Body of pancreas (tissue), 4 donors: ENCODE measurements at regions of chr1 and their contacts with region 1.

Region 1: DNA sequence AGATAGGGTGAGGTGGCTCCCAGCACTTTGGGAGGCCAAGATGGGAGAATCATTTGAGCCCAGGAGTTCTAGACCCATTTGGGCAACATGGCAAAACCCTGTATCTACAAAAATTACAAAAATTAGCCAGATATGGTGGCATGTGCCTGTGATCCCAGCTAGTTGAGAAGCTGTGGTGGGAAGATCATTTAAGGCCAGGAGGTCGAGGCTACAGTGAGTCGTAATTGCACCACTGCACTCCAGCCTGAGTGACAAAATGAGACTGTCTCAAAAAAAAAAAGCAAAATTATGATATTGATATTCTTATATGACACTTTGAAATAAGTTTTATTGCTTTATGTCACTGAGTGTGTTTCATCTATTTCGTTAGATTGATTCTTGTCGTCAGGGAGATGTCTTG is 7.4 kb downstream of the ACADM start:
- DNase-seq: no peak
- ATAC-seq: no peak
- H3K4me3 ChIP-seq: no peak overlapping the region
- H3K27ac ChIP-seq: no peak overlapping the region
- H3K4me1 ChIP-seq: peaks cover 18% of the 10 kb centered on the region
- H3K27me3 ChIP-seq: no peaks in the 10 kb centered on the region
- CTCF ChIP-seq: no peak
- POLR2A ChIP-seq: no peak

Region 2: DNA sequence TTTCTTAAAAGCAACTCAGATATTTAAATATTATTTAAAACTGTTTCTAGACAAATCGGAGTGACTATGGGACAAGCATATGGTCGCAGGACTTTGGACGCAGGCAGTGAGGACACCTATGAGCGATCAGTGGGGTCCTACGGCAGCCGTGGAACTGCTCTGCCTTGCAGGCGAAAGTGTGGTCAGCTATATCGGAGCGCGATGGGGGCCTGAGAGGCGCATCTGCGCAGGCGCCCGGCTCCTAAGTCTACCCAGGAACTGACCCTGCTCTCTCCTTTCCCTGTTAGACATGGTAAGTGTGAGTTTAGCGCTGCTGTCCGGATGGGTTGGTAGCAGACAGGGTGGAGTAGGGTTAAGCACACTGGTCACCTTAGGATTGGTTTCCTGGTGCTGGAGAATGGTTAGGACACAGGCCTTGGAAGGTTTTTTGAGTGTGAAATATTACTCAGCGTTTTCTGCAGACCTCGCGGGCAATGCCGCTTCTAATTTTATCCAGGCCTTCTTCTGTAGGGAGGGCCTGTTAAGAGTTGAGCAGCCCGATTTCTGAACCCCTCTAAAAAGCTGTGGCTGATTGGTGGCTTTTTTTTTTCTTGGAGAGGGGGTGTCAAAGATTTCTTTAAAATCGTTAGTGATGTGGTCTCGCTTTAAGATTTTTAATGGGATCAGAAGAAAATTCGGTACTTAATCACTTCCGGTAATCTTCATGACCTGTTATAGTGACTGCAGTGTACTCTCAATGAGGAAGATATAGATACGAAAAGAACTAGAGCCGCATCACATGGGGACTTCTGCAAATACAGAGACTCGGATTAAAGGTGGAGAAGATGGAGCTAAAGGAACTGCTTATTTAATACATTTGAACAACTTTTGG is 54.3 kb after region 1 on chr1 and contains the start of gene RABGGTB:
- intact Hi-C with region 1: loop called (anchors 10 kb)
- DNase-seq: peak; percentile 95 to 98 (median 96)
- ATAC-seq: peak; percentile 100
- H3K4me3 ChIP-seq: peak within 1 kb of the TSS; percentile 20 to 68
- H3K27ac ChIP-seq: peak within 1 kb of the TSS; percentile 71 to 88 (median 86)
- H3K4me1 ChIP-seq: peaks cover 49% of the 10 kb centered on the region
- H3K27me3 ChIP-seq: no peaks in the 10 kb centered on the region
- CTCF ChIP-seq: peak in 1 of 7 experiments; percentile 7
- POLR2A ChIP-seq: peak; percentile 51 to 95 (median 94)
- total RNA-seq, gene RABGGTB: 50.6 to 53.7 TPM